ENCODE measurements at regions of chr12 and their contacts with region 1.

Region 1: DNA sequence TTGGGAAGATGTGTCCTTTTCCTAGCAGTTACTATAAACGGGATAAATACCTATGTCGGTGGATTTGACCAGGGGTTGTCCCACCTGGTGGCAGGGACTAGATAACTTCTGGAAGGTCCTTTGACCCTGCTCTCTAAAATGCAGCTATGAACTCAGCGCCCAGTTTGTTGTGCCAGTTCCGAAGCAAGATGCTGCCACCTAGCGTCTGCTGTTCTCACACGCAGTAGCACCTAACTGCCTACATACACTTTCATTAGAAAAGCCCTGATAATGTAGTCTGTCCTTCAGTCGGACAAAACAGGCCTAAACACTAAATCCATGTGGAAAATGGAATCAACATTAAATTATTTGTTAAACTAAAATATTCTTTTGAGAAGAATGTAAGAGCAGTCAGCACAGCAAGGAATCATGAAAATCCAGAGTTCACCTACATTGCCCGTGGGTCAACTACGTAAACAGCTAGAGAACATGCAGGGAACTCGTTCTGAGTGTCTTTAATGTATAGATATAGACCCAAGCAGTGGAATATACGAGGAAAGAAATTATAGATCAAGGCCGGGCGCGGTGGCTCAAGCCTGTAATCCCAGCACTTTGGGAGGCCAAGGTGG is 51.1 kb upstream of the CRACR2A start:
- DNase-seq: peak; percentile 41
- H3K4me3 ChIP-seq: no peak overlapping the region
- H3K27ac ChIP-seq: no peak overlapping the region
- H3K4me1 ChIP-seq: no peaks in the 10 kb centered on the region
- H3K27me3 ChIP-seq: no peaks in the 10 kb centered on the region
- CTCF ChIP-seq: peak; percentile 94 to 95

Region 2: GRCh38 chr12:3135522-3136461 is 668.2 kb before region 1 on chr12:
- CTCF ChIA-PET with region 1: interaction called, 3 read pairs
- dilution Hi-C with region 1: no loop called
- in situ Hi-C with region 1: loop called in 1 of 2 experiments (anchors 25 kb)
- intact Hi-C with region 1: loop called (anchors 2 kb)
- DNase-seq: peak; percentile 51
- H3K4me3 ChIP-seq: no peak overlapping the region
- H3K27ac ChIP-seq: no peak overlapping the region
- H3K4me1 ChIP-seq: peaks cover 2% of the 10 kb centered on the region
- H3K27me3 ChIP-seq: no peaks in the 10 kb centered on the region
- CTCF ChIP-seq: peak; percentile 66 to 79